ENCODE measurements at regions of chr2 and their contacts with region 1.

Region 1: GRCh38 chr2:176140513-176141317 is 10.6 kb upstream of the HOXD4 start:
- DNase-seq: peak; percentile 49 to 69
- ATAC-seq: peak; percentile 91 to 96 (median 94)
- H3K4me3 ChIP-seq: peak overlapping the region; percentile 11 to 65 (median 46)
- H3K27ac ChIP-seq: peak overlapping the region in 3 of 10 donors; percentile 35 to 57 (median 56)
- H3K4me1 ChIP-seq: peaks cover 0 to 24% (median 18%) of the 10 kb centered on the region in 9 donors
- H3K27me3 ChIP-seq: peaks cover 22 to 100% (median 98%) of the 10 kb centered on the region in 7 donors
- CTCF ChIP-seq: peak; percentile 77 to 99 (median 93)

Region 2: GRCh38 chr2:176269319-176270099 is 128.8 kb after region 1 on chr2 and contains the start of gene MTX2:
- intact Hi-C with region 1: loop called in 1 of 10 experiments (anchors 5 kb)
- DNase-seq: peak; percentile 67 to 78
- ATAC-seq: peak; percentile 98 to 100 (median 99)
- H3K4me3 ChIP-seq: peak within 1 kb of the TSS; percentile 57 to 96 (median 78)
- H3K27ac ChIP-seq: peak within 1 kb of the TSS; percentile 66 to 96 (median 92)
- H3K4me1 ChIP-seq: peaks cover 0 to 37% (median 16%) of the 10 kb centered on the region in 9 donors
- H3K27me3 ChIP-seq: peaks cover 0 to 6% (median 0%) of the 10 kb centered on the region in 7 donors
- CTCF ChIP-seq: peak in 4 of 9 donors; percentile 6 to 39 (median 31)
- total RNA-seq, gene MTX2: 37.3 to 55.8 (median 46.8) TPM

Region 3: GRCh38 chr2:176554101-176555048 is 413.7 kb after region 1 on chr2:
- intact Hi-C with region 1: loop called (anchors 1 to 5 kb)
- DNase-seq: peak; percentile 11 to 38
- ATAC-seq: peak; percentile 62 to 90 (median 76)
- H3K4me3 ChIP-seq: peak overlapping the region in 9 of 10 donors; percentile 32 to 59 (median 45)
- H3K27ac ChIP-seq: peak overlapping the region in 8 of 10 donors; percentile 15 to 64 (median 53)
- H3K4me1 ChIP-seq: peaks cover 0 to 22% (median 17%) of the 10 kb centered on the region in 9 donors
- H3K27me3 ChIP-seq: peaks cover 0 to 67% (median 35%) of the 10 kb centered on the region in 7 donors
- CTCF ChIP-seq: peak; percentile 66 to 86 (median 76)

Region 4: DNA sequence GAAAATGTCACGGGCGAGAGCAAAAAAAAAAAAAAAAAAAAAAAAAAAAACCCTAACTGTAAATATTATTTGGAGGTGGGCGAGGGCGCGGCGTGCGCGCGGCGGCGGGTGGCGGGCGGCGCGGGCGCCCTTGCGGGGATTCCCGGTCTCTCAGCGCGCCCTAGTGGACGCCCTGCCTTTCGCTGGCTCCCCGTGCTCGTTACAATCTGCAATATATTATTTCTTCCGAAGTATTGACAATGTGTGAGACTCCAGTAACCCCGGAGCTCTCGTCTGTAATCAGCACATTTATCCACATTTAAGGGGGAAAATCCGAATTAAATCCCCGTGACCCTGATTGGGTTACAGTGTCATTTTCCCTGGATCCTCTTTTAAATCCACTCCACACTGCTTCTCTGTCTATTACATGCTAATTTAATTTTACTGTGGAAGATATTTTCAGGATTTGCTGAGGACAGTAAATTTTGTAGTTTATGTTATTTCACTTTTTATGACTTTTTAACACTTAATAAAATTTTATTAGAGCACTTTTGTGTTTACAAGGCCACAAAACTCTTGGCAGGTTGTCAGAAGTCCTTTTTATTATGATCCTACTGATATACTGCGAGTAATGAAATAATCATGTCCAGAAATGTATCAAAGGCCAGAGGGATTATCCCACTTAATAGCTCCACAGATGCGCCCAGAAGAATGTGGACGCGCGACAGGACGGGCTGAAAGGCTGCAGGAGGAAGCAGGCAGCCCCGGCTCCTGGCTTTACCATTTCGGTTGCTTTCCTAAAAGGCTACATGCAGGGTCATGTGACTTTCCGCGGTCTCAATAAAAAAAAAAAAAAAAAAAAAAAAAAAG is 497.7 kb after region 1 on chr2:
- intact Hi-C with region 1: loop called in 8 of 10 experiments (anchors 1 to 5 kb)
- DNase-seq: peak; percentile 47 to 70
- ATAC-seq: peak; percentile 55 to 94 (median 92)
- H3K4me3 ChIP-seq: peak overlapping the region; percentile 43 to 66 (median 62)
- H3K27ac ChIP-seq: peak overlapping the region in 3 of 10 donors; percentile 45 to 64 (median 58)
- H3K4me1 ChIP-seq: peaks cover 0 to 14% (median 7%) of the 10 kb centered on the region in 9 donors
- H3K27me3 ChIP-seq: peaks cover 5 to 97% (median 87%) of the 10 kb centered on the region in 7 donors
- CTCF ChIP-seq: peak; percentile 68 to 88 (median 77)

Region 5: GRCh38 chr2:176814306-176815052 is 673.8 kb after region 1 on chr2:
- intact Hi-C with region 1: loop called in 2 of 10 experiments (anchors 5 to 10 kb)
- DNase-seq: no peak
- ATAC-seq: no peak
- H3K4me3 ChIP-seq: no peak overlapping the region
- H3K27ac ChIP-seq: no peak overlapping the region
- H3K4me1 ChIP-seq: peaks cover 0 to 9% (median 0%) of the 10 kb centered on the region in 9 donors
- H3K27me3 ChIP-seq: peaks cover 0 to 13% (median 5%) of the 10 kb centered on the region in 7 donors
- CTCF ChIP-seq: peak; percentile 38 to 78 (median 66)

Measured in heart right ventricle (tissue), 16 donors.